ENCODE measurements at regions of chr6 and their contacts with region 1.

Region 1: DNA sequence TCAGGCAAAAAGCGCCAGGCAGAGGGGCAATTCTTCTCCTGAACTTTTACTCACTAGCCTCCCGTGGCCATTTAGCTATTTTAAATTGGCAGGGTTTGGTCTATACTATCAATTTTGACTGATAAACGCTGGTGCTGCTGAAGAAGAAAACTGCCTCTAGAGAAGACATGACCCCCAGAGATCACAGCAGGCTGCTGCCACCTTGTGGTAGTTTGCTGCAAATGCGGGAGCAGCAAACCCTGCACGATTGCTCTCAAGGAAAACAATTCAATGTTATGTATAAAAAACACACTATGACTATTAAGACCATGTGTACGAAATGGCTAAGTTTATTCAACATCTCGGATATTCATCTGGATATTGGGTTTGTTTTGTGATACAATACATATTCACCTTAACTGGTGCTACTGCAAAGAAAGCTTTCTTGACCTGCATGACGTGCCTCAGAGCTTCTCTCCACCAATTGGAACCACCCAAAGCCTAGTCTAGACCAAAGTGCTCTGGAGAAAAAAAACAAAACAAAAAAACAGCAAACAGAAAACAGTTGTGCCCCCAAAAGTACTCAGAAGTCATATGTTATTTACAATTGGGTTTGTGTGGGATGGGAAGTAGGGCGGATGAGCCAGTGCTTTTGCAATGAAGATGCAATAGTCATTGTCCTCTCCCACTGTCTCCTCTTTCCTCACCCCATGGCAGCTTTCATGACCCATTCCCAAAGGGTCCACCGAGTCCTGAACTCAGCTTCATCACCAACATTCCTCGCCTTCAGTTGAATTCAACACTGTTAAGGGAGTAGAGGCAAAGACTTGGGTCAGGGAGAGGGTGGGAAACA is 19.6 kb upstream of the IL17F start:
- DNase-seq: peak; percentile 66
- H3K4me3 Mint-ChIP-seq: no peak overlapping the region
- H3K27ac Mint-ChIP-seq: no peak overlapping the region
- H3K4me1 Mint-ChIP-seq: peaks cover 6% of the 10 kb centered on the region
- H3K27me3 Mint-ChIP-seq: no peaks in the 10 kb centered on the region

Region 2: GRCh38 chr6:51855310-51856082 is 408.4 kb before region 1 on chr6:
- intact Hi-C with region 1: loop called (anchors 10 kb)
- DNase-seq: no peak
- H3K4me3 Mint-ChIP-seq: no peak overlapping the region
- H3K27ac Mint-ChIP-seq: no peak overlapping the region
- H3K4me1 Mint-ChIP-seq: no peaks in the 10 kb centered on the region
- H3K27me3 Mint-ChIP-seq: no peaks in the 10 kb centered on the region

Region 3: GRCh38 chr6:52063584-52064344 is 200.2 kb before region 1 on chr6:
- intact Hi-C with region 1: loop called (anchors 1 kb)
- DNase-seq: peak; percentile 52
- H3K4me3 Mint-ChIP-seq: no peak overlapping the region
- H3K27ac Mint-ChIP-seq: peak overlapping the region; percentile 59
- H3K4me1 Mint-ChIP-seq: peaks cover 8% of the 10 kb centered on the region
- H3K27me3 Mint-ChIP-seq: peaks cover 21% of the 10 kb centered on the region

Region 4: DNA sequence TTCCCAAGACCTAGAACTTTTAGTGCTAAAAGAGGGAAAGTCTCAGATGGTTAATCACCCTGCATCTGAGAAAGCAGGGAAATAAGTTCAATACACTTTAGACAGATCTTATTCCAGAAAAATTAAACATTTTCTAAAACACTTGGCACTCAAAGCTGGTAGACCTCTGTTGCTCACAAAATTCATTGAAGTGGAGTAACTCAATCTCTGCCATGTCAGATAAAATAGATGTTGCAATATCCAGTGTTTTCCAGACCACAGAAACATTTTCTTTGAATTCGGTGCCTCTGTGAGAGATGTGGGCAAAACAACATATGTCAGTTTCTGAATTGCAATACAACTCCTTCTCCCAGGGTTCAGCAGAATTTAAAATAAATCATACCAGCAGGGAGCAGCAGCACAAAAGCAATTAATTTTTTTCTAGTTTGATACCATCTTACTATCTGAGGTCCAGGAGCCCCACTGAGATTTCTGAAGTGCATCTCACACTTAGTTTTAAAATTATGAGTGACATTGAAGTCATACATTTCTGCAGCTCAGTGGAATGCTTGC is 165.2 kb before region 1 on chr6:
- intact Hi-C with region 1: loop called (anchors 1 kb)
- DNase-seq: no peak
- H3K4me3 Mint-ChIP-seq: no peak overlapping the region
- H3K27ac Mint-ChIP-seq: no peak overlapping the region
- H3K4me1 Mint-ChIP-seq: no peaks in the 10 kb centered on the region
- H3K27me3 Mint-ChIP-seq: peaks cover 26% of the 10 kb centered on the region

Region 5: GRCh38 chr6:52276130-52276529 is 12.2 kb after region 1 on chr6:
- intact Hi-C with region 1: no loop called
- DNase-seq: no peak
- H3K4me3 Mint-ChIP-seq: no peak overlapping the region
- H3K27ac Mint-ChIP-seq: no peak overlapping the region
- H3K4me1 Mint-ChIP-seq: peaks cover 18% of the 10 kb centered on the region
- H3K27me3 Mint-ChIP-seq: no peaks in the 10 kb centered on the region

Measured in activated T-helper 2 cell treated with anti-CD3 and anti-CD28 coated beads, Interferon-gamma antibody, Interleukin-2, Interleukin-4, amounts not matched to agents 10 μg/mL and 5 μg/mL and 100 μg/mL, durations not matched to agents 14 hours and 24 hours and 36 hours (primary cell).